Dendritic cell treated with granulocyte-macrophage colony-stimulating factor and Interleukin-4, amounts not matched to agents 40 ng/mL and 50 ng/mL, for 4 days (primary cell): ENCODE measurements at regions of chr17 and their contacts with region 1.

Region 1: GRCh38 chr17:47970704-47971463 is at the start of gene CDK5RAP3:
- H3K4me3 Mint-ChIP-seq: peak within 1 kb of the TSS; percentile 93
- H3K27ac Mint-ChIP-seq: peak within 1 kb of the TSS; percentile 90
- H3K4me1 Mint-ChIP-seq: peaks cover 27% of the 10 kb centered on the region
- H3K27me3 Mint-ChIP-seq: no peaks in the 10 kb centered on the region

Region 2: DNA sequence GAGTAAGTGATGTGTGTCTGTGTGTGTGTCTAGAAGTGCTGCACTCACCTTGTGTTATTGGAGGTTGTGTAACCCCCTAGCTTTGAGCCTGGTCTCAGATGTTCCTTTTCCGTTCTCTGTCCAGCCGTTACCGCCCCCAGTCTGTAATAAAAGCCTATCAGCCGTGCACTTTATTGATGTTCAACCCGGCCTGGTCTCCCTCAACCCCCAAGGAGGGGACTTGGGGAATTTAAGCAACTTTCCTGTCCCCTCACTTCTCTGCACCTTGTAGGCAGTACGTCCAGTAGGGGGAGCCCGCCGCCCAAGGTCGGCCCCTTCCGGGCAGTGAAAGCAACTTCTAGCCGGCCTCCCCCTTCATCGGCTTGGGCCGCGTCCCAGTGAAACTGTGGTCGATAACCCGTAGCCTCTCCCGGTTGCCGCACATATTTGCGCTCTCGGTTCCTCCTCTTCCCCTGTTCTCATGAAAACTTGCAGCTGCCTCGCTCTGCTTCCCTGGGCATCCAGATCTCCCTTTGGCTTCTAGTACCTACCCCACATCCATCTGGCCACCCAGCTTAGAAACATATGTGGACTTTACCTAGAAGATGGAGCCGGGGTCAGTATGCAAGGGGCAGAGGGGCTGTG is 21.6 kb before region 1 on chr17:
- intact Hi-C with region 1: loop called (anchors 1 kb)
- H3K4me3 Mint-ChIP-seq: peak overlapping the region; percentile 51
- H3K27ac Mint-ChIP-seq: peak overlapping the region; percentile 67
- H3K4me1 Mint-ChIP-seq: peaks cover 84% of the 10 kb centered on the region
- H3K27me3 Mint-ChIP-seq: no peaks in the 10 kb centered on the region

Region 3: GRCh38 chr17:48127356-48128051 is 156.6 kb after region 1 on chr17:
- intact Hi-C with region 1: no loop called
- H3K4me3 Mint-ChIP-seq: no peak overlapping the region
- H3K27ac Mint-ChIP-seq: no peak overlapping the region
- H3K4me1 Mint-ChIP-seq: peaks cover 19% of the 10 kb centered on the region
- H3K27me3 Mint-ChIP-seq: no peaks in the 10 kb centered on the region

Region 4: DNA sequence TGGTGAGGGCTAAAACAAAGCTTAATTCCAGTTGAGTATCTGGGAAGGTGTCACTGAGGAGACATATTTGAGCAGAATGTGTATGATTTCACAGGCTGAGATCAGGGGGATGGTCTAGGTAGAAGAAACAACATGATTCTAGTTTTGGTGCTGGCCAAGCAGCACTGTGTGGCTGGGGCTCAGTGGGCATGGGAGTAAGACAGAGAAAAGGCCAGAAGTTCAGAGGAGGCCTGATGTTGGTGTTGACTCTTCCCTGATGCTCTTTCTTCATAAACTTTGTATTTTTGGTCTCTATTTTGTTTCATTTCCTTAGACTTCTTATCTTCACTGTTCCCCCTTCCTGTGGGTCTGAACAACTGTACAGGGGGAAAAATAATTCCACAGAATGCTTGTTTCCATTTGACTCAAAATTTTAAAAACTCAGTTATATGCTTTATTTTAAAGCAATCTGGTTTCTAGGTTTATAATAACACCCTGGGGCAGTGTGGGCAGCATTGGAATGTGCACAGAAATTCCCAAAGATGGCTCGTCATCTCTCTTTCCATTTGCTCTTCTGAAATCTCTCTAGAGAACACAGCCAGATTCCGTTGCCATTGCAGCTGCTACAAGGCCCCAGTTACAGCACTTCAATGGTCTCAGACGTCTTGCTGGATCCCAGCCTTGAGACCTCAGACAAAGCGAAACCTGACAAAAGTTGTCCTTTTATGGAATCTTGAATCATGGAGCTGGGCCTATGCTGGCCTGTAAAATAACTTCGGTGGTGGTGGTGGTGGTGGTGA is 205.0 kb after region 1 on chr17:
- intact Hi-C with region 1: no loop called
- H3K4me3 Mint-ChIP-seq: no peak overlapping the region
- H3K27ac Mint-ChIP-seq: no peak overlapping the region
- H3K4me1 Mint-ChIP-seq: no peaks in the 10 kb centered on the region
- H3K27me3 Mint-ChIP-seq: peaks cover 14% of the 10 kb centered on the region